Activated CD4-positive, alpha-beta memory T cell treated with anti-CD3 and anti-CD28 coated beads, Interleukin-2, amount 10 ng/mL, durations not matched to agents 7 days and 5 days (primary cell): ENCODE measurements at regions of chr13 and their contacts with region 1.

Region 1: DNA sequence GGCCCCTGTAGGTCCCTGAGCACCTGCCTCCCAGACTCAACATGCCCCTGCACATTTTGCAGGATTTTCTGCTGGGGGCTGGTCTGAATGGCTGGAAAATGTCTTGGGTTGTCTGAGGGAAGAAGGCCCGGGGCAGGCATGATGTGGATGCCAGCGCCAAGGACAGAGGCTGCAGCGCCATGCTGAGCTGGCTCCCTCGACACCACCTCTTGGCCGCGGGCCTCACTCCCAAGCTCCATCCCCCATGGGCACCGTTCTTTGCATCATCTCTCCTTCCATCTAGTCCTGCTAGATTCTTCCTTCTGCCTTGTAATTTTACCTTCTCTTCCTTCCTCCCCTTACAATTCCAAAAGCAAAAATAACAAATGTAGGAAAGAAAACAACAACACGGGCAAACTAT is 70.6 kb downstream of the ZIC5 start:
- DNase-seq: no peak
- H3K4me3 Mint-ChIP-seq: no peak overlapping the region
- H3K27ac Mint-ChIP-seq: no peak overlapping the region
- H3K4me1 Mint-ChIP-seq: peaks cover 7% of the 10 kb centered on the region
- H3K27me3 Mint-ChIP-seq: peaks cover 57% of the 10 kb centered on the region

Region 2: GRCh38 chr13:99911069-99911964 is 10.4 kb after region 1 on chr13:
- CTCF ChIA-PET with region 1: interaction called, 10 read pairs
- POLR2A ChIA-PET with region 1: no interaction called
- DNase-seq: no peak
- H3K4me3 Mint-ChIP-seq: peak overlapping the region; percentile 14
- H3K27ac Mint-ChIP-seq: peak overlapping the region; percentile 87
- H3K4me1 Mint-ChIP-seq: peaks cover 47% of the 10 kb centered on the region
- H3K27me3 Mint-ChIP-seq: peaks cover 2% of the 10 kb centered on the region

Region 3: DNA sequence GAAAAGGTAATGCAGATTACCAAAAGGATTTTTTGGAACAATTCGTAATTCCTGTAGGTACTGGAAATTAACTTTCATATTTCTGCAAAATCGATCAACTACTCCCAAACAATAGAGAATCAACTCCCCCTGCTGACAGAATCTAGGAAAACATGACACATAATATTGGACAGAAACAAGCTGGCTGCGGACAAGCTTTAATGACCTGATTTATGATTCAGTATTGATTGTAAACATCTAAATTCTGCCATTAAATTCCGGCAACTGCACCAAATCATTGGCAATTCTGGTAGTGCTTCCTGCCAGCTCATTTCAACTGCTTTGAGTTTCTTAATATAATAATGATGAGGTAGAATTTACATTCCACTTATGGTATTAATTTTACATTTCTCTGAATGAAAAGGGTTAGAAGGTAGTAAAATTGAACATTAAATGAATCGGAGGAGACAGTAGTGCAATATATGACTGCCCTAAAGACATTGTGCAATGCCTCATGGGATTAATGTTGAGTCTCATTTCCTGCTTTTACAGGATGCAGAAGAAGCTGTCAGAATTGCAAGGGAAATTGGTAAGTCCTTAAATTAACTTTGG is 334.4 kb after region 1 on chr13:
- CTCF ChIA-PET with region 1: interaction called, 11 read pairs
- POLR2A ChIA-PET with region 1: no interaction called
- DNase-seq: no peak
- H3K4me3 Mint-ChIP-seq: no peak overlapping the region
- H3K27ac Mint-ChIP-seq: no peak overlapping the region
- H3K4me1 Mint-ChIP-seq: peaks cover 8% of the 10 kb centered on the region
- H3K27me3 Mint-ChIP-seq: no peaks in the 10 kb centered on the region

Region 4: GRCh38 chr13:100514788-100515409 is 613.9 kb after region 1 on chr13:
- CTCF ChIA-PET with region 1: interaction called, 13 read pairs
- POLR2A ChIA-PET with region 1: no interaction called
- DNase-seq: peak; percentile 79
- H3K4me3 Mint-ChIP-seq: no peak overlapping the region
- H3K27ac Mint-ChIP-seq: no peak overlapping the region
- H3K4me1 Mint-ChIP-seq: peaks cover 27% of the 10 kb centered on the region
- H3K27me3 Mint-ChIP-seq: peaks cover 14% of the 10 kb centered on the region